CD8-positive, alpha-beta T cell (primary cell): ENCODE measurements at regions of chr2 and their contacts with region 1.

Region 1: GRCh38 chr2:225020168-225020849 is 22.0 kb downstream of the DOCK10 start:
- DNase-seq: no peak
- ATAC-seq: no peak
- H3K4me3 ChIP-seq: no peak overlapping the region
- H3K4me3 Mint-ChIP-seq: no peak overlapping the region
- H3K27ac ChIP-seq: no peak overlapping the region
- H3K27ac Mint-ChIP-seq: no peak overlapping the region
- H3K4me1 ChIP-seq: peaks cover 50% of the 10 kb centered on the region
- H3K4me1 Mint-ChIP-seq: peaks cover 77% of the 10 kb centered on the region
- H3K27me3 ChIP-seq: no peaks in the 10 kb centered on the region
- H3K27me3 Mint-ChIP-seq: no peaks in the 10 kb centered on the region
- CTCF ChIP-seq: no peak

Region 2: GRCh38 chr2:224836263-224836662 is 184.0 kb before region 1 on chr2:
- CTCF ChIA-PET with region 1: no interaction called
- POLR2A ChIA-PET with region 1: no interaction called
- intact Hi-C with region 1: no loop called
- DNase-seq: no peak
- ATAC-seq: no peak
- H3K4me3 ChIP-seq: no peak overlapping the region
- H3K4me3 Mint-ChIP-seq: no peak overlapping the region
- H3K27ac ChIP-seq: no peak overlapping the region
- H3K27ac Mint-ChIP-seq: peak overlapping the region; percentile 10
- H3K4me1 ChIP-seq: no peaks in the 10 kb centered on the region
- H3K4me1 Mint-ChIP-seq: no peaks in the 10 kb centered on the region
- H3K27me3 ChIP-seq: no peaks in the 10 kb centered on the region
- H3K27me3 Mint-ChIP-seq: no peaks in the 10 kb centered on the region
- CTCF ChIP-seq: no peak

Region 3: DNA sequence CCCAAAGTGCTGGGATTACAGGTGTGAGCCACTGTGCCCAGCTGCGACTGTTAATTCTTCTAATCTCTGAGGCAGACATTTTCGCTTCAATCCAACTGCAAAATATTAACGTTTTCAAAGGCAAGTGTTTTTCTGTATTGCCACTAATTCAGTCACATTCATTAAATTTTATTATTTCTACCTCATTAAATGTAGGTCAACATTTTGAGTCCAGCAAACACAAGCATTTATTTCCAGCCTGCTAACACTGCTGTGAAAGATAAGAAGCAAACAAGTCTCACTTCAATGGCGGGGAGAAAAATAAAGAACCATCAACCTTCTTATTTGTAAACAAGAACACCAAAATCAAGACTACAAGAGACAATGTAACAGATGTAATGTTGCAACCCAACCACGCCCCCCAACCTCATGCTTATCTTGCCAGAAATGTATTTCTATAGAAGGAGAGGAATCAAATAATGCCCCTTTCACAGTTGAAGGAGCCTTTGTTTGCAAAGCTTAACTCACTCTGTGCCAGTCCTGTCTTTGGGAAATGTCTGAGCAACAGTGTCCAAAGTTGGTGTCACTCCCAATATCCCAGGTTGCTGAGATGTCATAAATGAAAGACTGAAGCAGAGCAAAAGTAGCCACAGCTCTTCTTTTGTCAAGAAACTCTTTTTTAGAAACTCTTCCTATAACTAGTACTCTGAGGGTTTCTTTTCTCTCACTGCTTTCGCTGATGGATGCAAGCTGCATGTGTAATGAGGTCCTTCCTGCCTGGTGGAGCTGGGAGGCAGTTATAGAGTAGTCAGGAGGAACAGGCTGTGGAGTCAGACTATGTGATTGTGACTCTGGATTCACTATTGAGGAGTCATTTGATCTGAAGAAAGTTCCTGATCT is 13.4 kb after region 1 on chr2:
- CTCF ChIA-PET with region 1: interaction called, 4 read pairs
- POLR2A ChIA-PET with region 1: no interaction called
- intact Hi-C with region 1: loop called in 1 of 2 experiments (anchors 2 kb)
- DNase-seq: no peak
- ATAC-seq: no peak
- H3K4me3 ChIP-seq: no peak overlapping the region
- H3K4me3 Mint-ChIP-seq: no peak overlapping the region
- H3K27ac ChIP-seq: no peak overlapping the region
- H3K27ac Mint-ChIP-seq: peak overlapping the region; percentile 77
- H3K4me1 ChIP-seq: peaks cover 60% of the 10 kb centered on the region
- H3K4me1 Mint-ChIP-seq: peaks cover 88% of the 10 kb centered on the region
- H3K27me3 ChIP-seq: no peaks in the 10 kb centered on the region
- H3K27me3 Mint-ChIP-seq: no peaks in the 10 kb centered on the region
- CTCF ChIP-seq: no peak

Region 4: GRCh38 chr2:225052703-225053102 is 32.4 kb after region 1 on chr2:
- CTCF ChIA-PET with region 1: no interaction called
- POLR2A ChIA-PET with region 1: no interaction called
- intact Hi-C with region 1: loop called (anchors 5 kb)
- DNase-seq: peak in 8 of 9 experiments; percentile 15 to 78 (median 40)
- ATAC-seq: peak; percentile 79
- H3K4me3 ChIP-seq: no peak overlapping the region
- H3K4me3 Mint-ChIP-seq: peak overlapping the region; percentile 64
- H3K27ac ChIP-seq: peak overlapping the region in 1 of 2 experiments; percentile 32
- H3K27ac Mint-ChIP-seq: peak overlapping the region; percentile 87
- H3K4me1 ChIP-seq: peaks cover 54% of the 10 kb centered on the region
- H3K4me1 Mint-ChIP-seq: peaks cover 67% of the 10 kb centered on the region
- H3K27me3 ChIP-seq: no peaks in the 10 kb centered on the region
- H3K27me3 Mint-ChIP-seq: no peaks in the 10 kb centered on the region
- CTCF ChIP-seq: no peak